Heart right ventricle (tissue), 16 donors: ENCODE measurements at regions of chr15 and their contacts with region 1.

Region 1: DNA sequence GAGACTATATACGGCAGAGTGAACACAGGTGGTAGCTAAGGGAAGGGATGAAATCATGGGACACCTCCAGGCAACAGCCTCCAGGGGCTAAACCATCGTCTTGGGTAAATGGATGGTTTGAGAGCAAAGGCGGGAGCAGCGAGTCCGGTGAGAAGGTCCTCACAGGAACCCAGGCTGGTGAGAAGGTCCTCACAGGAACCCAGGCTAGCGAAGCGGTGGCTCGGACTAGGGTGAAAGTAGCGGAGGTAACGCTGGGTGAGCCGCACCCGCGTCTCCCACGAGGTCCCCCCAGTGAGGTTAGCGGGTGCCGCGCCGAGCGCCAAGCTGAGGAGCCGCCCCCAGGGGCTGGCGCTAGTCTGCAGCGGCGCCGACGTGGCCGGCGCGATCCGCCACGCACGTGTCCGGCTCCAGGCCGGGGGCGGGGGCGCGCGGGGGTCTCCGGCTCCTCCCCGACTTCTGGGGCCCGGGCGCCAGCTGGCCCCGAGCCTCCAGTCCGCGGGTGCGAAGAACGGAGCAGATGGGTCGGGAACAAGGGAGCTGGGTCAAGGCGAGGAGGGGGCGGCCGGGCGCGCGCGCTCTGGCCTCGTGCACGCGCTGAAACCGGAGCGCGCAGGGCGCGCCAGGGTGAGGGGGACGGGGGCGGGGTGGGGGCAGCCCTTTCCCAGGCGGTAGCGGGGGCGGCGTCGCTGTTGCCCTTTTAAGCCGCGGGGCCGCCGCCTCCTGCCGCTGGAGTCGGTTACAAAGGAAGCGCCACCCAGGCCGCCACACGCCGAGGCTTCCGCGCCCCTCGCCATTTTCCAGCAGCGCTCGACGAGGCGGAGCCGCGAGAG is at the start of gene UBE2Q2:
- DNase-seq: peak; percentile 75 to 81
- ATAC-seq: peak; percentile 64 to 81 (median 76)
- H3K4me3 ChIP-seq: peak within 1 kb of the TSS; percentile 63 to 95 (median 85)
- H3K27ac ChIP-seq: peak within 1 kb of the TSS; percentile 69 to 97 (median 94)
- H3K4me1 ChIP-seq: peaks cover 0 to 58% (median 47%) of the 10 kb centered on the region in 9 donors
- H3K27me3 ChIP-seq: no peaks in the 10 kb centered on the region
- CTCF ChIP-seq: no peak
- total RNA-seq, gene UBE2Q2: 16.0 to 36.5 (median 25.3) TPM

Region 2: GRCh38 chr15:75785771-75786574 is 57.0 kb before region 1 on chr15:
- intact Hi-C with region 1: no loop called
- DNase-seq: no peak
- ATAC-seq: no peak
- H3K4me3 ChIP-seq: no peak overlapping the region
- H3K27ac ChIP-seq: no peak overlapping the region
- H3K4me1 ChIP-seq: no peaks in the 10 kb centered on the region
- H3K27me3 ChIP-seq: peaks cover 0 to 36% (median 12%) of the 10 kb centered on the region in 7 donors
- CTCF ChIP-seq: peak in 4 of 9 donors; percentile 12 to 26 (median 18)

Region 3: GRCh38 chr15:75903331-75904239 is 60.6 kb after region 1 on chr15 and contains the start of gene FBXO22:
- intact Hi-C with region 1: loop called in 4 of 10 experiments (anchors 5 to 10 kb)
- DNase-seq: peak; percentile 89 to 91
- ATAC-seq: peak; percentile 98 to 99 (median 99)
- H3K4me3 ChIP-seq: peak within 1 kb of the TSS; percentile 63 to 98 (median 92)
- H3K27ac ChIP-seq: peak within 1 kb of the TSS in 9 of 10 donors; percentile 53 to 92 (median 82)
- H3K4me1 ChIP-seq: peaks cover 0 to 32% (median 23%) of the 10 kb centered on the region in 9 donors
- H3K27me3 ChIP-seq: no peaks in the 10 kb centered on the region
- CTCF ChIP-seq: no peak
- total RNA-seq, gene FBXO22: 15.6 to 23.4 (median 18.6) TPM